ENCODE measurements at regions of chr13 and their contacts with region 1.

Region 1: DNA sequence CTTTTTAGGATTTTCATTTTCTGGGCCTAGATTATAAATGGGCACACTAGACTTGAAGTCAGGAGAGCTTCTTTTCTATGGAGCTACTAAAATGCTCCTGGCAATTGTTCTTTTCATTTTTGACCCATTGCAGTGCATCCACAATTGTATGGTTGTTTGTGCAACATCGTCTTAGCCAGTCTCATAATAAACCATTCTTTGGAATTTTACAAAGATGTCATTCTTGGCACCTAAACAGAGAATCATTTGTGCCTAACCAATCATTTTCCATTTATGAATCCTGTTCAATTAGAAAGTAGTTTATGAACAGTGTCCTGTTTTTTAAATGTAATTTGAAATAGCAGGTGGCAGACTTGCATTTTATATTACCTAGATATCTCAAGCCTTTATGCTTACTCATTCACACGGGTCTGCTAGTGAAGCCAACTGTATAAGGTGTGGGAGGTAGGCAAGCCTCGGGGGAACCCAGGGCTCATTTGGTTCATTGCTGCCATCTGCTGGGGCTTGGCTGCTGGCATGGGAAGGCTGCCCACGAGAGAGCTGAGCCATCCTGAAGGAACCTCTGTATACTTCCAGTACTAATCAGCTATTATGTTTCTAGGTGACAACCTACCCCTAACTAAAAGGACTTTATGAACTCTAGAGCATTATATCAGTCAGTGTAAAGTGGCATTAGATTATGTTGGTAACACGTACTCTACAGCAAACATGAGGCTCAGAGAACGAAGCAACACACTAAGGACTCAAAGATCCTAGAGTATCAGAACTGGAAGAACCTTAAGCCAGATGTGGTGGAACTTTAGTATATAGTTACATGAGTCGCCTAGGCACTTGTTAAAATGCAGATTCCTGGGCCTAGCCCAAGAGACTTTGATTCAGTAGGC is 60.0 kb downstream of the TPT1 start:
- DNase-seq: peak; percentile 53 to 59
- ATAC-seq: peak; percentile 87 to 96 (median 94)
- H3K4me3 ChIP-seq: no peak overlapping the region
- H3K27ac ChIP-seq: no peak overlapping the region
- H3K4me1 ChIP-seq: peaks cover 0 to 20% (median 7%) of the 10 kb centered on the region in 9 donors
- H3K27me3 ChIP-seq: no peaks in the 10 kb centered on the region
- CTCF ChIP-seq: peak; percentile 32 to 76 (median 75)

Region 2: GRCh38 chr13:45047394-45048310 is 233.3 kb before region 1 on chr13:
- intact Hi-C with region 1: loop called in 8 of 10 experiments (anchors 1 to 10 kb)
- DNase-seq: peak; percentile 44 to 77
- ATAC-seq: peak; percentile 70 to 92 (median 83)
- H3K4me3 ChIP-seq: peak overlapping the region; percentile 21 to 58 (median 50)
- H3K27ac ChIP-seq: peak overlapping the region in 6 of 10 donors; percentile 33 to 73 (median 54)
- H3K4me1 ChIP-seq: peaks cover 0 to 14% (median 8%) of the 10 kb centered on the region in 9 donors
- H3K27me3 ChIP-seq: no peaks in the 10 kb centered on the region
- CTCF ChIP-seq: peak; percentile 75 to 94 (median 81)

Region 3: GRCh38 chr13:45055198-45055901 is 225.6 kb before region 1 on chr13:
- intact Hi-C with region 1: loop called in 1 of 10 experiments (anchors 10 kb)
- DNase-seq: no peak
- ATAC-seq: peak in 1 of 8 donors; percentile 69
- H3K4me3 ChIP-seq: no peak overlapping the region
- H3K27ac ChIP-seq: peak overlapping the region in 6 of 10 donors; percentile 7 to 40 (median 18)
- H3K4me1 ChIP-seq: peaks cover 0 to 19% (median 8%) of the 10 kb centered on the region in 9 donors
- H3K27me3 ChIP-seq: peaks cover 0 to 2% (median 0%) of the 10 kb centered on the region in 7 donors
- CTCF ChIP-seq: no peak

Region 4: GRCh38 chr13:45119991-45120864 is 160.8 kb before region 1 on chr13 and contains the start of gene GTF2F2:
- intact Hi-C with region 1: loop called in 1 of 10 experiments (anchors 5 kb)
- DNase-seq: peak; percentile 89 to 92
- ATAC-seq: peak; percentile 95 to 98 (median 96)
- H3K4me3 ChIP-seq: peak within 1 kb of the TSS; percentile 57 to 93 (median 75)
- H3K27ac ChIP-seq: peak within 1 kb of the TSS in 9 of 10 donors; percentile 50 to 92 (median 84)
- H3K4me1 ChIP-seq: peaks cover 2 to 25% (median 17%) of the 10 kb centered on the region in 9 donors
- H3K27me3 ChIP-seq: no peaks in the 10 kb centered on the region
- CTCF ChIP-seq: no peak
- total RNA-seq, gene GTF2F2: 17.3 to 24.9 (median 21.5) TPM

Region 5: DNA sequence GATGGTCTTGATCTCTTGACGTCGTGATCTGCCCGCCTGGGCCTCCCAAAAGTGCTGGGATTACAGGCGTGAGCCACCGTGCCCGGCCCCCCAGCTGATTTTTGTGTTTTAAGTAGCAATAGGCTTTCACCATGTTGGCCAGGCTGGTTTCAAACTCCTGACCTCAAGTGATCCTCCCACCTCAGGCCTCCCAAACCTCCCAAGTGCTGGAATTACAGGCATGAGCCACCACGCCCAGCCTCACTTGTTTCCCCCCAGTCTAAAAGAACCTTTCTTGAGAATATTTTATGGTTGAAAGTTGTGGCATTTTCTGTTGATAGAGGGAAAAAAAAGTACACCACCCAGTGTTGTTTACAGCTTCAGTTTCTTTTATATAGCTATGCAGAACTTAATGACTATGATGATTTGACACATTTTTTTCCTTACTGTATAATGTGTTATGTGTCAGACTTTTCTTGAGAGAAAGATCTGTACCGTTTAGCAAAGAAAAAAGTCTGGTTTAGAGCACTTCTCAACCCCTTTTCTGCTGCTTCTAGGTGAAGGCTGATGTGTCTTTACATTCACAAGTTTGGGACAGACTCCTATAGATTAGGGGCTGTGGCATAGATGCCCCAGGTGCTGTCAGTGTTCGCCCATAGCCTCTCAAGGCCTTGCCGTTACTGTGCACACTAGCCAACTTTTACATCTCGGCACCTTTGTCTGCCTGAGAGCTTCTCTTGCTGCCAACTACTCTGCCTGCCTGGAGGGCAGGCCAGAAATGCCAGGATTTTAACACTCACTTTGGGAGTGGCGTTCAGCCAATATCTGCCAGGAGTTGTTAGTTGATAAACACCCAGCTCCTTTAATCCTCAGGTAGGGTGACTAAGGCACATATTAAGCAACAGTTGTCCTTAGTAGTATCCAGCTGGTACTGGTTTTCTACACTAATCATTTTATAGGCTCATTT is 113.1 kb before region 1 on chr13:
- intact Hi-C with region 1: no loop called
- DNase-seq: peak in 1 of 2 donors; percentile 22
- ATAC-seq: peak; percentile 29 to 87 (median 76)
- H3K4me3 ChIP-seq: no peak overlapping the region
- H3K27ac ChIP-seq: no peak overlapping the region
- H3K4me1 ChIP-seq: peaks cover 0 to 7% (median 0%) of the 10 kb centered on the region in 9 donors
- H3K27me3 ChIP-seq: no peaks in the 10 kb centered on the region
- CTCF ChIP-seq: no peak

Region 6: GRCh38 chr13:46041419-46041839 is 760.4 kb after region 1 on chr13:
- intact Hi-C with region 1: no loop called
- DNase-seq: no peak
- ATAC-seq: no peak
- H3K4me3 ChIP-seq: no peak overlapping the region
- H3K27ac ChIP-seq: no peak overlapping the region
- H3K4me1 ChIP-seq: peaks cover 0 to 10% (median 0%) of the 10 kb centered on the region in 9 donors
- H3K27me3 ChIP-seq: no peaks in the 10 kb centered on the region
- CTCF ChIP-seq: no peak